ENCODE measurements at regions of chr6 and their contacts with region 1.

Region 1: GRCh38 chr6:26537846-26538571 is at the start of gene HMGN4:
- DNase-seq: peak; percentile 73 to 97
- ATAC-seq: peak; percentile 60 to 80 (median 69)
- H3K4me3 ChIP-seq: peak within 1 kb of the TSS; percentile 87
- H3K4me3 Mint-ChIP-seq: peak within 1 kb of the TSS; percentile 95
- H3K27ac ChIP-seq: peak within 1 kb of the TSS; percentile 89
- H3K27ac Mint-ChIP-seq: peak within 1 kb of the TSS; percentile 99 to 100
- H3K4me1 ChIP-seq: peaks cover 37% of the 10 kb centered on the region
- H3K4me1 Mint-ChIP-seq: peaks cover 67 to 68% of the 10 kb centered on the region in 2 donors
- H3K27me3 ChIP-seq: no peaks in the 10 kb centered on the region
- H3K27me3 Mint-ChIP-seq: peaks cover 8% of the 10 kb centered on the region in 2 donors
- CTCF ChIP-seq: no peak
- total RNA-seq, gene HMGN4: 55.7 to 80.6 (median 70.3) TPM

Region 2: DNA sequence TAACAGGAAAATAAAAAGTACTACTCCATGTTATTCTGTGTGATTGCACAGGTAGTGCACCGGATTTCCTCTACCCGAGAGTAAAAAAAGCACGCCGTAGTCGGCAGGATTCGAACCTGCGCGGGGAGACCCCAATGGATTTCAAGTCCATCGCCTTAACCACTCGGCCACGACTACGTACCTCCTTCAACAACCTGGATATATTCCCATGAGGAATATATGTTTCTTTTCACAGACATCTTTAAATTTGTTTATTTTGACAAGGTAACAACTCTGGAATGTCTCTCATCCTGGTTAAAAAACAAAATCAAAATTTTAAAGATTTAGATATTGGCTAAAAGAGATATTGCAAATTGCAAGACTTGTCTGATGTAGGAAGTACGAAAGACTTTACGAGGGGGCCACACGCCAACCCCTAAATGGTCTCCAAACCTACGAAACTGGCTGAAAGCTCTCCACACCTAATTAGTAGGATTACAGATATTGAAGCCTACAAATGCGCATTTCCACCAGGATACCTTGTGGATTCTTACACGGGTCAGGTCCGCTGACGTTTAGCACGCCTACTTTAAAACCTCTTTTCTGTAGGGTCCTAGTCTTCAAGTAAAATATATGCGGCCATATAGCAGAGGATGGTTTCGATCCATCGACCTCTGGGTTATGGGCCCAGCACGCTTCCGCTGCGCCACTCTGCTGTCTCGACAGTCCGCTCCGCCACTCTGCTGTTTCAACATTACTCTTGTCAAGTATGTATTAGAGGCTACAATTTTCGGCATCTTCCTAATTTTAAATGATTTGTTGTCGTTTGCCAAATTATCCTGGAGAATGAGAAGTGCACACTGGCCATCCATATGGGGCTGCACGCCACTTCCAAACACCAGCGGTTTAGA is 225.3 kb before region 1 on chr6:
- intact Hi-C with region 1: loop called (anchors 2 kb)
- DNase-seq: peak; percentile 79 to 93
- ATAC-seq: peak; percentile 52 to 75 (median 68)
- H3K4me3 ChIP-seq: peak overlapping the region; percentile 59
- H3K4me3 Mint-ChIP-seq: peak overlapping the region; percentile 98
- H3K27ac ChIP-seq: peak overlapping the region; percentile 36
- H3K27ac Mint-ChIP-seq: peak overlapping the region; percentile 98 to 99
- H3K4me1 ChIP-seq: peaks cover 20% of the 10 kb centered on the region
- H3K4me1 Mint-ChIP-seq: peaks cover 58% of the 10 kb centered on the region in 2 donors
- H3K27me3 ChIP-seq: no peaks in the 10 kb centered on the region
- H3K27me3 Mint-ChIP-seq: peaks cover 6 to 13% of the 10 kb centered on the region in 2 donors
- CTCF ChIP-seq: no peak

Region 3: DNA sequence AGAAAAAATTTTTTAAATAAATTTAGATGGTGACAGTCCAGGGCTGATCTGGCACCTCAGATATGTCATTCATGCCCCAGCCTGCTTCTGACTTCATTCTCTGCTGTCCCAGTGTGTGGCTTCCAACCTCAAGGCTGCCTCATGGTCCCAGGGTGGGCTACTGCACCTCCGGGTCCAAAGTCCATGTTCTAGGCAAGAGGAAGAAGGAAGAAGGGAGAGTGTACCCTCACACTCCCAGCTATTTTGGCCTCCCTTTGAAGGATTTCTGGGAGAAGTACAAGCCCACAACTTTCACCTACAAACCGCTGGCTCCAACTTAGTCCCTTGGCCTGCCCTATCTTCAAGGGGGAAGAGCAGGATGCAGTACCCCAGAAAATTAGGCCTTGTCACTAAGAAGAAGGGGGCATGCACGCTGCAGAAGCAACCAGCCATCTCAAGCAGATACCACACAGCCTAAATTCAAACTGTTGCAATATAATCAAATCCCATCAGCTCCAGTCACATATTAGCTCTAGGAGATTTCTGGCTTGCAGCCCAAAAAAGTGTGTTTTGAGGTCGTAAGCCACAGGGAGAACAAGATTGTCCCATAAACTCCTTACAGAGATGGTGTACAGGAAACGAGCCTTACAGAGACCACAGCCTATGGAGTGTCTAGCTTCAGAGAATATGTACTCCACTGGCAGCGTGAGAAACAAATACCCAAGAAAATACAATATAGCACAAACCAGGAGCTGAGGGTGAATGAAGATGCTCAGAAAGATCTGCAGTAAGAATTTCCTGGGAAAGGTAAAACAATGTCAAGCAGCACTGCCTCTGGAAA is 173.9 kb before region 1 on chr6:
- intact Hi-C with region 1: no loop called
- DNase-seq: peak in 1 of 2 donors; percentile 68
- ATAC-seq: no peak
- H3K4me3 ChIP-seq: peak overlapping the region; percentile 74
- H3K4me3 Mint-ChIP-seq: no peak overlapping the region
- H3K27ac ChIP-seq: peak overlapping the region; percentile 99
- H3K27ac Mint-ChIP-seq: no peak overlapping the region
- H3K4me1 ChIP-seq: peaks cover 30% of the 10 kb centered on the region
- H3K4me1 Mint-ChIP-seq: peaks cover 47 to 51% of the 10 kb centered on the region in 2 donors
- H3K27me3 ChIP-seq: no peaks in the 10 kb centered on the region
- H3K27me3 Mint-ChIP-seq: no peaks in the 10 kb centered on the region
- CTCF ChIP-seq: no peak

Region 4: DNA sequence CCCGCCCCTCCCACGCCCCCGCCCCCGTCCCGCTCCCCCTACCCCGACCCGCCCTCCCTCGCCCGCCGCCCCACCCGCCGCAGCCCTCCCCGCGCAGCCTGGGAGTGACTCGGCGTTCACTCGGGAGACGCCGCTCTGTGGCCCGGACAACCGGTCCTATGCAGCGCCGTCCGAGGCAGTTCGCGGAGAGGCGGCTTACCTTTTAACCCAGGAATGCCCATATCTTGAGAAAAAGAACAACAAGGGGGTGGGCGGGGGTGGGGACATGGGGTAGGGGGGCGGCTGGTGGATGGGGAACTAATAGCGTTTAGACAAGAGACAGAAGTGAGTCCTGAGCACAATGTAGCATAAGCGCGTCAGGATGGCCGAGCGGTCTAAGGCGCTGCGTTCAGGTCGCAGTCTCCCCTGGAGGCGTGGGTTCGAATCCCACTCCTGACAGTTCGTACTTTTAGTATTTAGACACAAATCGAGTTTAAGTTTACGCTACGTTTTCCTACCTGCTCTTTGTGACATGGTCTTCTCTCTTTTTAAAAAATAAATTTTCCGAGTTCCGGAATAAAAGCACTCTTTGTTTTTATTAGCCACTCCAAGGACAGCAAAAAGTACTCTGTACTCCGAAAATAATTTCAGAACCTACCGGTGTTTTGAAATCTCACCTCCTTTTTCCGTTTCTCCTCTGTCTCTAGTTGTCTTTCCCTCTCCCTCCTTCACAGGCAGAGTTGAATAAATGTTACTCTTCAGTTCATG is 17.0 kb before region 1 on chr6:
- intact Hi-C with region 1: loop called (anchors 1 kb)
- DNase-seq: peak; percentile 84 to 94
- ATAC-seq: peak; percentile 70 to 88 (median 73)
- H3K4me3 ChIP-seq: peak overlapping the region; percentile 85
- H3K4me3 Mint-ChIP-seq: peak overlapping the region; percentile 89
- H3K27ac ChIP-seq: peak overlapping the region; percentile 91
- H3K27ac Mint-ChIP-seq: peak overlapping the region; percentile 89 to 96
- H3K4me1 ChIP-seq: peaks cover 13% of the 10 kb centered on the region
- H3K4me1 Mint-ChIP-seq: peaks cover 26 to 30% of the 10 kb centered on the region in 2 donors
- H3K27me3 ChIP-seq: no peaks in the 10 kb centered on the region
- H3K27me3 Mint-ChIP-seq: no peaks in the 10 kb centered on the region
- CTCF ChIP-seq: no peak

Region 5: DNA sequence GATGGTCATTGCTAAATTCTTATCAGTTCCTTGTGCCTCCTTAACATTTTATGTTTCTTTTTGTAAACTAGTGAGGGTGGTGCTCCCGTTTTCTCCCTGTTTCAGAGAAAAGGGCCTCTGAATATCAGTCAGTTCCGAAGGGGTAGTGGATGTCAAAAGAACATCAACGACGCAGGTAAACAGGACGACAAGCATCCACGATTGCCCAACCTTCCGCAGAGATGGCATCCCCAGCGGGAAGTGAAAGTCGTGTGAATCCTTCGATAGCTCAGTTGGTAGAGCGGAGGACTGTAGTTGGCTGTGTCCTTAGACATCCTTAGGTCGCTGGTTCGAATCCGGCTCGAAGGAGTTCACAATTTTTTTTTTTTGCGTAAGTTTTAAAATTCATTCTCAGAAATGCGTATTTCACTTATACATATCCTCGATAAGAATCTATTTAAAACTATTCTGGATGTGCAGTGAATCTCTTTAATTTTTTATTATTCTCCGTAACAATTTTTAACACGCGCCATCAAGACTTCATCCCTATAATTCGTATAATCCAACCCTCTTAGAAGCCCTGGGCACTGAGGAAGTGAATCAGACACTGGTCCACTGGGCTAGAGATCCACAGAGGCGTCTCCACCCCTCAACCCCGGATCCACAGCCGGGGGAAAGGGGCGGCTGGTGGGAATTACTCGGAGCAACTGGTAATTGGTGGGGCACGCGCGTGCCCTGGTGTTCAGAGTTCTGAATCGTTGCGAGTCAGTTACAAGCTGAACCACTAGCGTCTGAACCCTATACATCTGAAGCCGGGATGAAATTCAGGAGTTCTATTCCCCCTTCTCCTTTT is 30.8 kb after region 1 on chr6:
- intact Hi-C with region 1: loop called (anchors 1 kb)
- DNase-seq: peak; percentile 99
- ATAC-seq: peak; percentile 76 to 82 (median 81)
- H3K4me3 ChIP-seq: peak overlapping the region; percentile 90
- H3K4me3 Mint-ChIP-seq: peak overlapping the region; percentile 97
- H3K27ac ChIP-seq: peak overlapping the region; percentile 66
- H3K27ac Mint-ChIP-seq: peak overlapping the region; percentile 99 to 100
- H3K4me1 ChIP-seq: peaks cover 25% of the 10 kb centered on the region
- H3K4me1 Mint-ChIP-seq: peaks cover 27 to 34% of the 10 kb centered on the region in 2 donors
- H3K27me3 ChIP-seq: no peaks in the 10 kb centered on the region
- H3K27me3 Mint-ChIP-seq: peaks cover 5 to 6% of the 10 kb centered on the region in 2 donors
- CTCF ChIP-seq: no peak

Region 6: GRCh38 chr6:27592481-27593199 is 1054.6 kb after region 1 on chr6:
- intact Hi-C with region 1: no loop called
- DNase-seq: peak in 1 of 2 donors; percentile 53
- ATAC-seq: peak in 1 of 3 donors; percentile 29
- H3K4me3 ChIP-seq: no peak overlapping the region
- H3K4me3 Mint-ChIP-seq: no peak overlapping the region
- H3K27ac ChIP-seq: no peak overlapping the region
- H3K27ac Mint-ChIP-seq: no peak overlapping the region
- H3K4me1 ChIP-seq: no peaks in the 10 kb centered on the region
- H3K4me1 Mint-ChIP-seq: no peaks in the 10 kb centered on the region
- H3K27me3 ChIP-seq: peaks cover 42% of the 10 kb centered on the region
- H3K27me3 Mint-ChIP-seq: peaks cover 23 to 27% of the 10 kb centered on the region in 2 donors
- CTCF ChIP-seq: no peak

Region 7: GRCh38 chr6:27753668-27754407 is 1215.8 kb after region 1 on chr6:
- intact Hi-C with region 1: loop called (anchors 10 kb)
- DNase-seq: peak; percentile 19 to 75
- ATAC-seq: no peak
- H3K4me3 ChIP-seq: peak overlapping the region; percentile 81
- H3K4me3 Mint-ChIP-seq: peak overlapping the region; percentile 99
- H3K27ac ChIP-seq: no peak overlapping the region
- H3K27ac Mint-ChIP-seq: peak overlapping the region; percentile 95 to 100
- H3K4me1 ChIP-seq: peaks cover 15% of the 10 kb centered on the region
- H3K4me1 Mint-ChIP-seq: peaks cover 32 to 37% of the 10 kb centered on the region in 2 donors
- H3K27me3 ChIP-seq: no peaks in the 10 kb centered on the region
- H3K27me3 Mint-ChIP-seq: peaks cover 2 to 9% of the 10 kb centered on the region in 2 donors
- CTCF ChIP-seq: no peak

Measured in natural killer cell (primary cell).